CD8-positive, alpha-beta T cell (primary cell): ENCODE measurements at regions of chr19 and their contacts with region 1.

Region 1: DNA sequence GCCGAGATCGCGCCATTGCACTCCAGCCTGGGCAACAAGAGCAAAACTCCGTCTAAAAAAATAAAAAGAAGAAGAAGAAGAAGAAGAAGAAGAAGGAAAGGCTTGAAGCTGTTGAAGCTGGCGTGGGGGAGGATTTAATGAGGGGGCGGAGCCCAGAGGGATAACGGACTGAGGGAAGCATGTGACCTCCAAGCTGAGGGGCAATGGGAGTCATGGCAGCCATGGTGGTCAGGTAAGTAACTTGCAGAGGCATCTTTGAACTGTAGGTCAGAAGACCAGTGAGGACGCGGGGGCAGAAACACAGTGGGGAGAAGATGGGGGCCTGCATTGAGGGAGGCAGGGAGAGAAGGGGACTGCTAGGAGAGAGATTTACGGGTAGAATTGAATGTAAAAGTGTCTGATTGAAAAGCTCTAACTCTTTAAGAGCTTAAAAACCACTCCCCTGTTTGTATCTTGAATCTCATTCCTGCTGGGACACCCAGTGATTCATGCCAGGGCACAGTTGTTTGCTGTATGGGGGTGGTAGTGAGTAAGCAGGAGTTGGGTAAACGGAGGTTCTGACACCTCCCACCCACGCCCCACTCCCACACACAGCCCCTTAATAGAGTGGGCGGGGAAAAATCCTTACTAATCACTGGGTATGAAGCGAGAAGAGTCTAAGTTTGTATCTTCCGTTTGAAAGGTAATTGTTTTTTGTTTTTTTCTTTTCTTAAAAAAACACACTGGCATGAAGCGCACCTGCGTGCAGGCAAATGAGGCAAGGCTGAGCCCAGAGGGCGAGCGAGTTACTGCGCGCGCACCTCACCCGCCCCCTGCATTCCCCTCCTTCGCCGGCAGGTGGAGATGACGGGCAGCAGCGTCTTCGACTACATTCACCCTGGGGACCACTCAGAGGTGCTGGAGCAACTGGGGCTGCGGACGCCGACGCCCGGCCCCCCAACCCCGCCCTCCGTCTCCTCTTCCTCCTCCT is 13.0 kb downstream of the TMEM160 start:
- DNase-seq: peak; percentile 90 to 99 (median 96)
- ATAC-seq: peak; percentile 98
- H3K4me3 ChIP-seq: peak overlapping the region; percentile 52 to 58
- H3K4me3 Mint-ChIP-seq: peak overlapping the region; percentile 88
- H3K27ac ChIP-seq: peak overlapping the region in 1 of 2 experiments; percentile 30
- H3K27ac Mint-ChIP-seq: peak overlapping the region; percentile 85
- H3K4me1 ChIP-seq: peaks cover 16% of the 10 kb centered on the region
- H3K4me1 Mint-ChIP-seq: peaks cover 17% of the 10 kb centered on the region
- H3K27me3 ChIP-seq: peaks cover 4 to 6% of the 10 kb centered on the region in 2 experiments
- H3K27me3 Mint-ChIP-seq: peaks cover 8% of the 10 kb centered on the region
- CTCF ChIP-seq: peak; percentile 99

Region 2: DNA sequence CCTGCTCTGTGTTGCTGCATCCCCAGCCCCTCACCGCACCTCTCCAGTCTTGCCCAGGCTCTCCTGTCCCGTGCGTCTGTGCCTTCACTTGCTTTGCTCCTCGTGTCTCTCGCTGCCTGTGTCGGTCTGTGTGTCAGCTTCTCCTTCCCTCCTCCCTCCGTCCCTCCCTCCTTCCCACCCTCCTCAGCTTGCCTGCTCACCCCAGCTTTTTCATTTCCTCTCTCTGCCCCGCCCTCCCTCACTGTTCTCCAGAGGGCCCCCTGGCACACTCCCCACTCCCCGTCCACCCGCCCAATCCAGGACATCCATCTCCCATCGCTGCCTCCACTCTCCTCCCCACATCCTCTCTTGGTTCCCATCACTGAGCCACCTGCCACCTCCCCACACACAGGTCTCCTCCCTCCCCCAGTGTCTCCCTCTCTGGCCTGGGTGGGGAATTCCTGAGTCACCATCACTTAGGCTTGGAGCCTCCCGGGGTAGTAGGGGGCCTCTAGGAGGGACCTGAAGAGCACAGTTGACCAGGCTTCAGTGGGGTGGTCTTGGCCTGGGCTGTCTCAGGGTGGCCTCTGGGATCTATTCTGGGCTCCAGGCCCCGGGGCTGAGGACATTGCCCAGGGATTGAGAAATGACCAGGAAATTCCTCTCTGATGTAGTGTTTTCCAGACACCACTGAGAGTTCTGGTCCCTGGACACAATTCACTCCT is 410.3 kb before region 1 on chr19 and contains the start of gene PTGIR:
- CTCF ChIA-PET with region 1: no interaction called
- POLR2A ChIA-PET with region 1: no interaction called
- intact Hi-C with region 1: no loop called
- DNase-seq: no peak
- ATAC-seq: peak; percentile 19
- H3K4me3 ChIP-seq: no peak within 1 kb of the TSS
- H3K4me3 Mint-ChIP-seq: peak within 1 kb of the TSS; percentile 29
- H3K27ac ChIP-seq: no peak within 1 kb of the TSS
- H3K27ac Mint-ChIP-seq: no peak within 1 kb of the TSS
- H3K4me1 ChIP-seq: peaks cover 41% of the 10 kb centered on the region
- H3K4me1 Mint-ChIP-seq: peaks cover 37% of the 10 kb centered on the region
- H3K27me3 ChIP-seq: no peaks in the 10 kb centered on the region
- H3K27me3 Mint-ChIP-seq: peaks cover 2% of the 10 kb centered on the region
- CTCF ChIP-seq: no peak
- total RNA-seq, gene PTGIR: 0.25 TPM in 1 of 2 experiments, not detected in the other

Region 3: DNA sequence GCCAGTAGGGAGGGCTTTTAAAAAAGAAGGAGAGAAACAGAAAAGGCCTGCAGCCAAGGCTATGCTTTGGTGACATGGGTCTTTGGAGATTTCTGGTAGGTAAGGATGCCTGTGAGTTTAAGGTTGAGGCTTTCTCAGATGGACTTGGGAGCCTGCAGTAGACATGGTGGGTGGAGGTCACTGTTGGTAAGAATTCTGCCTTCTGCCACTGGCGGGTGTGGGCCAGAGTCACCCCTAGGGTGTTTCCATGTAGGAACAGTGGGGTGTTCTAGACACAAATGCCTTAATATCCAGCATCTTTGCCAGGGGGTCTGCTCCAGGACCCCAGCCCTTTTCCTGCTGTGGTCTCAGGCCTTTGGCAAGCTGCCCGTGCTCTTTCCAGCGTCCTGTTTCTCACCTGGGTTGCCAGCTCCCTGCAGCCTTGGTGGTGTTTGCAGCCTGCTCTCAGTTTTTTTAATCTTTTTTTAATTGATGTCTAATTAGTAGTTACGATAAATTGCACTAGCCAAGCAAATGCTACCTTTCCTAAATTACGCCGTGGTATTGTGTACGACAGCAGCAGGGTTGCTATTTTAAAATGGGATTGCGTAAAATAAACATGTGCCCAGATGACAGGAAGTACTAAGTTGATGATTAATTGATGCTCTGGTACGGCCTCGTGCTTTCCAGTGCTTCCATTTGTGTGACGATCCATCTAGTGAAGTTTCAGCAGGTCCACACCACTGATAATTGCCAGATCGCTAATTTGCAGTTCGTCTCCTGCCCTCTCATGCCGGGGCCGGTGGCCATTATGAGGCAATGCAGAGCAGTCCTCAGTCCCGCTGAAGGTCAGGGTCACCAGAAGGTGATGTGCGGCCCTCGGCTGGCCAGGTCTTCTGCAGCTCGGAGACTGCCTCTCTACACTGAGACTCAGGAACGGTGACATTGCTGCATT is 51.1 kb before region 1 on chr19:
- CTCF ChIA-PET with region 1: no interaction called
- POLR2A ChIA-PET with region 1: no interaction called
- intact Hi-C with region 1: no loop called
- DNase-seq: no peak
- ATAC-seq: no peak
- H3K4me3 ChIP-seq: no peak overlapping the region
- H3K4me3 Mint-ChIP-seq: no peak overlapping the region
- H3K27ac ChIP-seq: no peak overlapping the region
- H3K27ac Mint-ChIP-seq: no peak overlapping the region
- H3K4me1 ChIP-seq: peaks cover 10% of the 10 kb centered on the region
- H3K4me1 Mint-ChIP-seq: peaks cover 20% of the 10 kb centered on the region
- H3K27me3 ChIP-seq: no peaks in the 10 kb centered on the region
- H3K27me3 Mint-ChIP-seq: no peaks in the 10 kb centered on the region
- CTCF ChIP-seq: no peak

Region 4: DNA sequence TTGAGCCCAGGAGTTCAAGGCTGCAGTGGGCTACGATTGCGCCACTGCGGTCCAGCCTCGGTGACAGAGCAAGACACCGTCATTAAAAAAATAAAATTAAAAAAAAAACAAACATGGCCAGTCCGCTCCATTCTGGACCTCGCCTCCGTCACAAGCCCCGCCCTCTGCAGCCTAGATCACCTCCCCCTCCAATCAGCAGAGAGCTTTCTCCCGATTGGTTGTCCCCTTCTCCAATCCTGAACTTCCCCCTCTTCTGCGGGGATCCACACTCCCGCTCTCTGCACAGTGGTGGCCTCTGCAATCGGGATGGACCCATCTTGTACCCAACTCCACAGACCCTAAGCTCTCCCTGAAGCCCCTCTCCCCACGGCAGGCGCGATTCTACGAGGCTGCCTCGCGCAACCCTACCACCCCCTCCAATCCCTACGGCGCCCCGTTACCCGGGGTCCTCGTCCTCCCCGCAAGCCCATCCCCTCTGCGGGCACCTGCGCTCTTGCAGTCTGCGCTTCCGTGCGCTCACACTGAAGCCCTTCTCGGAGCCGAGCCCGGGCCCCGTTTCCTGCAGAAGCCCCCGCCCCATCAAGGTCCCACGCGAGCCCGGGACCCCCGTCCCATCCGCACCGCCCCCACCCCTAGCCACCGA is 12.5 kb after region 1 on chr19:
- CTCF ChIA-PET with region 1: interaction called, 5 read pairs
- POLR2A ChIA-PET with region 1: interaction called, 14 read pairs
- intact Hi-C with region 1: loop called (anchors 1 kb)
- DNase-seq: peak; percentile 22 to 85 (median 65)
- ATAC-seq: peak; percentile 37
- H3K4me3 ChIP-seq: peak overlapping the region; percentile 67 to 96
- H3K4me3 Mint-ChIP-seq: peak overlapping the region; percentile 98
- H3K27ac ChIP-seq: peak overlapping the region; percentile 31 to 62
- H3K27ac Mint-ChIP-seq: peak overlapping the region; percentile 91
- H3K4me1 ChIP-seq: peaks cover 8% of the 10 kb centered on the region
- H3K4me1 Mint-ChIP-seq: peaks cover 20% of the 10 kb centered on the region
- H3K27me3 ChIP-seq: no peaks in the 10 kb centered on the region
- H3K27me3 Mint-ChIP-seq: no peaks in the 10 kb centered on the region
- CTCF ChIP-seq: no peak

Region 5: GRCh38 chr19:47058621-47059020 is 23.2 kb after region 1 on chr19:
- CTCF ChIA-PET with region 1: no interaction called
- POLR2A ChIA-PET with region 1: no interaction called
- intact Hi-C with region 1: no loop called
- DNase-seq: no peak
- ATAC-seq: no peak
- H3K4me3 ChIP-seq: no peak overlapping the region
- H3K4me3 Mint-ChIP-seq: no peak overlapping the region
- H3K27ac ChIP-seq: no peak overlapping the region
- H3K27ac Mint-ChIP-seq: no peak overlapping the region
- H3K4me1 ChIP-seq: no peaks in the 10 kb centered on the region
- H3K4me1 Mint-ChIP-seq: no peaks in the 10 kb centered on the region
- H3K27me3 ChIP-seq: no peaks in the 10 kb centered on the region
- H3K27me3 Mint-ChIP-seq: no peaks in the 10 kb centered on the region
- CTCF ChIP-seq: no peak

Region 6: GRCh38 chr19:47075179-47075810 is 39.9 kb after region 1 on chr19:
- CTCF ChIA-PET with region 1: interaction called, 4 read pairs
- POLR2A ChIA-PET with region 1: no interaction called
- intact Hi-C with region 1: loop called in 1 of 2 experiments (anchors 2 kb)
- DNase-seq: no peak
- ATAC-seq: no peak
- H3K4me3 ChIP-seq: no peak overlapping the region
- H3K4me3 Mint-ChIP-seq: no peak overlapping the region
- H3K27ac ChIP-seq: no peak overlapping the region
- H3K27ac Mint-ChIP-seq: no peak overlapping the region
- H3K4me1 ChIP-seq: no peaks in the 10 kb centered on the region
- H3K4me1 Mint-ChIP-seq: peaks cover 8% of the 10 kb centered on the region
- H3K27me3 ChIP-seq: no peaks in the 10 kb centered on the region
- H3K27me3 Mint-ChIP-seq: no peaks in the 10 kb centered on the region
- CTCF ChIP-seq: no peak

Region 7: DNA sequence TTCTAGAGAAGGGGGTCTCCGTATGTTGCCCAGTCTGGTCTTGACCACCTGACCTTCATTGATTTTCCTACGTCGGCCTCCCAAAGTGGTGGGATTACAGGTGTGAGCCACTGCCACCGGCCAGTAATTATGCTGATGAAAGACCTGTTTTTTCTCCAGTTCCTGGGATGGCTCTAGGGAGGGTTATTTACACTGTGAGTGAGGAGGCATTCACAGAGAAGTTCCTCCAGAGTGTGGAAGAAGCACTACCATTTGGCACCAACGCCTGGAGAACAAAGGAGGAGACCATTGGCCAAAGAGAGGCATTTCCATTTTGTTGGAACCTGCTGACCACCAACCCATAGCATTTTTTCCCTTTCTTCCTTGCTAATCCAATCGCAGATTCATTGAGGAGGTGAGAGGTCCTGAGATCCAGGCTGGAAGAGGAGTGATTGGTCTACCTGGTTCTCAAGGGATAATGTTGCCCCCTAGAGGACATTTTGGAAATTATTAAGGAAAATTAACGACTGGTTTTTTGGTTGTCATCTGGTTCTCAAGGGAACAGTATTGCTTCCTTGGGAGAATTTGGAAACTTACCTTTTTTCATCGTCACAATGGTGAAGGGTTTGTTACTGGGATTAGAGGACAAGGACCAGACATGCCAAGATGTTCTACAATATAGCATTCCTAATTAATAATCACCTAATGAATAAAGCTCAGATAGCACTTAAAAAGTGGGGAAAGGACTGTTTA is 89.7 kb after region 1 on chr19:
- CTCF ChIA-PET with region 1: interaction called, 10 read pairs
- POLR2A ChIA-PET with region 1: interaction called, 3 read pairs
- intact Hi-C with region 1: loop called in 1 of 2 experiments (anchors 1 kb)
- DNase-seq: peak in 4 of 9 experiments; percentile 11 to 79 (median 64)
- ATAC-seq: peak; percentile 55
- H3K4me3 ChIP-seq: no peak overlapping the region
- H3K4me3 Mint-ChIP-seq: no peak overlapping the region
- H3K27ac ChIP-seq: no peak overlapping the region
- H3K27ac Mint-ChIP-seq: no peak overlapping the region
- H3K4me1 ChIP-seq: peaks cover 2% of the 10 kb centered on the region
- H3K4me1 Mint-ChIP-seq: peaks cover 5% of the 10 kb centered on the region
- H3K27me3 ChIP-seq: no peaks in the 10 kb centered on the region
- H3K27me3 Mint-ChIP-seq: no peaks in the 10 kb centered on the region
- CTCF ChIP-seq: peak; percentile 75

Region 8: DNA sequence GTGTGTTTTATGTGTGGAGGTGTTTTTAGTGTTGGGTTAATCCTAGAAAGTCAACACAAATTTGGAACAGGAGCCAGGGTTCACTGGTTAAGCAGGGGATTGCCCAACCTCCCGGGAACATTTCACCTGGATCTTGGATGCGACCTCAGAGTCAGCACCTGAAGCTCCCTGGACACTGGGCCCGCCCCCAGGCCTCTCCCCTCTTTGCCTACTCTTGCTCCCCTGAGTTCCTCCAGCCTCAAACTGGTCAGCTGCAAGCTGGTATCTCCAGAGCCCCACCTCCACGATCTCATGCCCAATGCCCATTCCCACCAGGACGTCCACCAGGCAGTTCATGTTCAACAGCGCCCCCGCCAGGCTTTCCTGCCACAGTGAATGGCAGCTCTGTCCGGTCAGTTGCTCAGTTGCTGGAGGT is 1791.2 kb after region 1 on chr19:
- CTCF ChIA-PET with region 1: no interaction called
- POLR2A ChIA-PET with region 1: no interaction called
- intact Hi-C with region 1: no loop called
- DNase-seq: no peak
- ATAC-seq: no peak
- H3K4me3 ChIP-seq: no peak overlapping the region
- H3K4me3 Mint-ChIP-seq: no peak overlapping the region
- H3K27ac ChIP-seq: no peak overlapping the region
- H3K27ac Mint-ChIP-seq: no peak overlapping the region
- H3K4me1 ChIP-seq: no peaks in the 10 kb centered on the region
- H3K4me1 Mint-ChIP-seq: no peaks in the 10 kb centered on the region
- H3K27me3 ChIP-seq: no peaks in the 10 kb centered on the region
- H3K27me3 Mint-ChIP-seq: no peaks in the 10 kb centered on the region
- CTCF ChIP-seq: no peak